ENCODE measurements at regions of chr3 and their contacts with region 1.

Region 1: DNA sequence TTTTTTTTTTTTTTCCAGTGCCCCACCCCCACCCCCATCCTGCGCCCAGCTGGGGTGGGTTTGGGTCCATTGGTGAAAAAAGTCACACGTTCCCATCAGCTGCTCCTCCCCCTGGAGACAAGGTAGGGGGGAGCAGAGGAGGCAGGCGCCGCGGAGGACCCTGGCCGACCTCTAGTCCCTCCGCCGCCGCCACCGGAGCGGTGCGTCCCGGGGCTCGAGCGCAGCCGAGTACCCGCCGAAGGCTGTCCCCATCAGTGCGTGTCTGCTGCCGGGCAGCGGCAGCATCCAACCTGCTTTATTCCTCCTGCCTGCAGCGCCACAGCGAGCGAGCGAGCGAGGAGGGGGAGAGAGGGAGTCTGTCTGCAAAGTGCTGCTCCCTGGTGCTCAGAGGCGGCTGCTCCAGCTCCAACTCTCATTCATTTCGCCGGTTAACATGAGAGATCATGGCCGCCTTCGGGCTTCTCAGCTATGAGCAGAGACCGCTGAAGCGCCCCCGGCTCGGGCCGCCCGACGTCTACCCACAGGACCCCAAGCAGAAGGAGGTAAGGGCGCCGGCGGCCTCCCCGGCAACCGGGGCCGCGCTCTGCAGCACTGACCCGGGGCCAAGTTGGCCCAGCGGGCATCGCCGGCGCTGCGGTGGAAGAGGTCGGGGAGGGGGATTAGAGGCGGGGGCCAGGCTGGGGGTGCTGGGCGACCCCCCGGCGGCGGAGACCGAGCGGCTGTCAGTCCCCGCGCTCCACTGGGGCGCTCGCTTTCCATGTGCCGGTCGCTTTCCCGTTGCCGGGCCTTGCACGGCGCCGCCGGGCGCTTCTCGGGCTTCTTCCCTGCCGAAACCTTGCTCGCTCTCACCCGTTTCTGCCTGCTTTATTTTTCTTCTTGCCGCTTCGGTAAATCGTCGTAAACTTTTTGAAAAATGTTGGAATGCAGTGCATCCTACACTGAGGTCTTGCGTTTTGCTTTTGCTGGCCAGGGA is 1.3 kb downstream of the MED12L start:
- DNase-seq: peak; percentile 94 to 97 (median 94)
- H3K4me3 ChIP-seq: peak overlapping the region; percentile 56 to 93 (median 82)
- H3K27ac ChIP-seq: peak overlapping the region; percentile 65 to 80
- H3K4me1 ChIP-seq: peaks cover 4 to 49% (median 30%) of the 10 kb centered on the region in 4 experiments
- H3K27me3 ChIP-seq: peaks cover 0 to 11% (median 0%) of the 10 kb centered on the region in 5 experiments

Region 2: GRCh38 chr3:151008699-151009098 is 78.1 kb before region 1 on chr3:
- CTCF ChIA-PET with region 1: interaction called, 22 read pairs
- POLR2A ChIA-PET with region 1: interaction called, 3 read pairs
- DNase-seq: peak; percentile 61 to 71 (median 62)
- H3K4me3 ChIP-seq: no peak overlapping the region
- H3K27ac ChIP-seq: no peak overlapping the region
- H3K4me1 ChIP-seq: peaks cover 0 to 2% (median 0%) of the 10 kb centered on the region in 4 experiments
- H3K27me3 ChIP-seq: no peaks in the 10 kb centered on the region

Region 3: GRCh38 chr3:151067158-151067557 is 19.6 kb before region 1 on chr3:
- CTCF ChIA-PET with region 1: interaction called, 18 read pairs
- POLR2A ChIA-PET with region 1: interaction called, 4 read pairs
- DNase-seq: peak; percentile 58 to 68 (median 64)
- H3K4me3 ChIP-seq: no peak overlapping the region
- H3K27ac ChIP-seq: no peak overlapping the region
- H3K4me1 ChIP-seq: no peaks in the 10 kb centered on the region
- H3K27me3 ChIP-seq: no peaks in the 10 kb centered on the region

Region 4: GRCh38 chr3:151101270-151101969 is 14.7 kb after region 1 on chr3:
- CTCF ChIA-PET with region 1: interaction called, 39 read pairs
- POLR2A ChIA-PET with region 1: interaction called, 4 read pairs
- DNase-seq: peak in 2 of 3 donors; percentile 41 to 61
- H3K4me3 ChIP-seq: no peak overlapping the region
- H3K27ac ChIP-seq: no peak overlapping the region
- H3K4me1 ChIP-seq: peaks cover 0 to 44% (median 21%) of the 10 kb centered on the region in 4 experiments
- H3K27me3 ChIP-seq: no peaks in the 10 kb centered on the region

Region 5: DNA sequence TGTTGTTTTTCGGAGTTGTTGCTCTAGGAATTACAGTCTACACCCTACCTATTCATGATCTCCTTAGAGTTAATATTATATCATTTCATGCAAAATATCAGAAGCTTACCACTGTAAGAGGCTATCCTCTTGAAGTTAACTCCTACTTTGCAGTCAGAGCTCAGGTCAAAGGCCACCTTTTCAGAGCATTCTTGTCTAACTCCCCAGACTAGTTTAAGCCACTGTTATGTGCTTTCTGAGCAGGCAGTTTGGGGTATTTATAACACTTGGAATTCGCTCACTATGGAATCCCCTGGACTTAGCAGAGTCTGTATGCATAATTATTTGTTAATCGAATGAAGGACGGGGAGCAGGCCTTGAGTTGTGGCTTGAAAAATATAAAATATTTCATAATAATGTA is 20.4 kb after region 1 on chr3:
- CTCF ChIA-PET with region 1: interaction called, 39 read pairs
- POLR2A ChIA-PET with region 1: interaction called, 3 read pairs
- DNase-seq: no peak
- H3K4me3 ChIP-seq: no peak overlapping the region
- H3K27ac ChIP-seq: no peak overlapping the region
- H3K4me1 ChIP-seq: peaks cover 0 to 47% (median 15%) of the 10 kb centered on the region in 4 experiments
- H3K27me3 ChIP-seq: no peaks in the 10 kb centered on the region

Region 6: DNA sequence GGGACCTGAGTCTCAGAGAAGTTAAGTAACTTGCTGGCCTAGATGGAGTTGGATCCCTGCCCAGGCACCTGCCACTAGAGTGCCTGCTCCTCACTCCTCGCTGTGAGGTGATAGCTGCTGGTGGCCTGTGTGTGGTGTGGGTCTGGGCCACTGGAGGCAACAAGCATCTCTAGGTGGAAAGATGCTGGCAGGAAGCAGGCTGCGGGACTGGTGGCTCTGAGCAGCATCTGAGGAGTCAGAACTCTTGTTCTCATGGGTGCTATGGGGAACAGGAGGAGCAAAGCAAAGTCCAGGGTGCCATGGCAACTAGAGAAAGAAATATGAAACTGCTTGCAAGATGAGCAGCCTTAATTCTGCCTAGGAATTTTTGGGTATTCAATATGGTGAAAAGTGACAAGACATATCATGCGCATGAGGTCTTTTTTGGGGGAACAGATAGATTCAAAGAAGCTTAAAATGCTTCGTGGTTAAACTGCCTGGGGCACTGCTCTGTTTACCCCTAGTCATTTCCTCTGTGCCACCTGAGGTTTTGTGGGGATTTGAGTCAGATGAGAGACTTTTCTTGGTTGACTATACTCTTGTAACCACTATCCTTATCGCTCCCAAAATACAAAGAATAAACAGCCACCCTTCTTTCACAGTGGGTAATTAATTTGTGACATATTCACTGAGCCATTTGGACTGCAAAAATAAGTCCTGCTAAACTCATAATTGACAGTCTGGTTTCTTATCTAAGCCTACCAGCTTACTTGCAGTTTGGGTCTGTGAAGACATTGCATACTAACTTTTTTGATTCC is 49.0 kb after region 1 on chr3:
- CTCF ChIA-PET with region 1: interaction called, 250 read pairs
- POLR2A ChIA-PET with region 1: interaction called, 18 read pairs
- DNase-seq: peak; percentile 93 to 99 (median 98)
- H3K4me3 ChIP-seq: peak overlapping the region in 4 of 7 experiments; percentile 38 to 56 (median 48)
- H3K27ac ChIP-seq: peak overlapping the region; percentile 87 to 92
- H3K4me1 ChIP-seq: peaks cover 18 to 65% (median 37%) of the 10 kb centered on the region in 4 experiments
- H3K27me3 ChIP-seq: no peaks in the 10 kb centered on the region